Head of caudate nucleus (tissue), 42 donors: ENCODE measurements at regions of chr2 and their contacts with region 1.

Region 1: GRCh38 chr2:95115418-95115817 is 6.2 kb downstream of the MRPS5 start:
- DNase-seq: peak; percentile 49 to 90 (median 80)

Region 2: DNA sequence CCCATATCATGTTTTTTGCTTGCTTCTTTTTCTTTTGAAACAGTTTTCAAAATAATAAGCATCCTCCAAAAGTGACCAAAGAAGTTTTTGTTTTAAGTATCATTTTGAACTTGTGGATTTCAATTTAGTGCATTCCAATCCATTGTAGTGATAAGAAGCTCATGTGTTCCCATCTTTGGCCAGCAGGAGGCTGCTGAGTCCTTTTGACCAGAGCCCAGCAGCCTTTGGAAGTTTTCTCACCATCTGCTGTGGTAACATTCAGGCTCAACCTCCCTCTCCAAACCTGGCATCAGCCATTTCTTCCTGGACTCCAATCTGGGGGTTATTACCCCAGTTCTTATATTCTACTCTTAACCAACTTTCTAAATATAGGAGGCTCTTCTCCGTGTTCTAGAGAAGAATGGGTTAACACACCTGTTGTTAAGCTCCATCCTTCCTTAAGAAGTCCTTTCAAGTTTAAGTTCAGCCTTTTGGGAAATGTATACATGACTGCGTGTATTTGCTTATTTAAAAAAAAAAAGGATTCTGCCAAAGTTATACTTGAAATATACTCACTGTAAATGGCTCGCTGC is 128.9 kb before region 1 on chr2:
- intact Hi-C with region 1: loop called (anchors 10 kb)
- DNase-seq: peak; percentile 20 to 90 (median 72)

Region 3: DNA sequence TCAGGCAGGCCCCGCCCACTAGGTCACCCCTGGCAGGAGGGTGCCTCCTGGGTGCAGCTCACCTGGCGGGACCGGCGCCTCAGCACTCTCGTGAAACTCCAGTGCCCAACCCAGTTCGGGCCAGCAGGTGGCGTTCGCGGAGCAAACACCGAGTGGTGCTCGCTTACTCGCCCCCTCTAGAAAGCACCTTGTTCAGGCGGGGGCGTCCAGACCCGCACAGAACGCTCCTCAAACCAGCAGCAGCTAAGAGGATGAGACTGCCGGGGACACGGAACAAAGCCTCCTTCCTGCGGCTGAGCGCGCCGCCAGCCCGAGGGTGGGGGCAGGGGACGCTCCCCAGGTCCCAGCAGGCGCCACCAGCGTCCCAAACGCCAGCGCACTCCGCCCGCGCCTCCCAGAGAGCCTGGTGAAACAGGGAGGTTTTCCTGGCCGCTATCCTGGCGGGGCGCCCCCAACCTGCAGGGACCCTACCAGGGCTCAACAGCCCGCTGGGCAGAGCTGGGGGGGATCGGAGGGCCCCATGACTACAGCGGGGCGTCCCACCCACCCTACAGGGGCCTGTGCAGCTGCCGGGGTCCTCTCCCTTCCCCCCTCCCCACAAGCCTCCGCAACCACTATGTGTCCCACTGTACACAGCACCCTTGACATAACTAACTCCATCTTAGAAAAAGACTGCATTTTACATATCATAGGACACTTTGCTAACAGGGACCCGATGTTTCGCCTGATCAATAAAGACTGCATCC is 38.5 kb before region 1 on chr2:
- intact Hi-C with region 1: loop called (anchors 5 kb)
- DNase-seq: peak; percentile 84 to 96 (median 91)